Mammary epithelial cell (primary cell): ENCODE measurements at regions of chr1 and their contacts with region 1.

Region 1: DNA sequence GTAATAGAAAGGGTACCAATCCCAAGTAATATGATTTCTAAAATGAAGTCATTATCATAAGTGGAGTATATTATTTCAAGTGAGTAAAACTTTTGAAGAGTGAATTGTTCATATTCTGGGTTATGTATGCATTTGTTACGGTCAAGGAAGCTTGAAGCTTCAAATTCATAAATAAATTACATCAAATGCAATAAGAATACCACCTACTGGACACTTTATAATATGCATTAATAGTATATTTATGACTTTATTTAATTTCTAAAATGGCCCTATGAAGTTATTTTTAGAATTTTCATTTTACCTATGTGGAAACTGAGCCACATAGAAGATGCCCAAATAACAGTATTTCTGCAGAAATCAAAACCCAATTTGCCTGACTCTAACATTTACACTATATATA is 260.6 kb downstream of the SMYD3 start:
- DNase-seq: no peak
- H3K4me3 ChIP-seq: no peak overlapping the region
- H3K27ac ChIP-seq: no peak overlapping the region
- H3K4me1 ChIP-seq: no peaks in the 10 kb centered on the region
- H3K27me3 ChIP-seq: no peaks in the 10 kb centered on the region
- CTCF ChIP-seq: no peak

Region 2: GRCh38 chr1:246012341-246012740 is 234.1 kb before region 1 on chr1:
- CTCF ChIA-PET with region 1: no interaction called
- dilution Hi-C with region 1: no loop called
- in situ Hi-C with region 1: no loop called
- intact Hi-C with region 1: loop called (anchors 2 kb)
- DNase-seq: peak; percentile 16
- H3K4me3 ChIP-seq: no peak overlapping the region
- H3K27ac ChIP-seq: no peak overlapping the region
- H3K4me1 ChIP-seq: peaks cover 6% of the 10 kb centered on the region
- H3K27me3 ChIP-seq: no peaks in the 10 kb centered on the region
- CTCF ChIP-seq: peak; percentile 44 to 71